ENCODE measurements at regions of chr6 and their contacts with region 1.

Region 1: GRCh38 chr6:138509371-138509770 is 10.1 kb upstream of the NHSL1 start:
- DNase-seq: peak; percentile 71
- H3K4me3 Mint-ChIP-seq: no peak overlapping the region
- H3K27ac Mint-ChIP-seq: no peak overlapping the region
- H3K4me1 Mint-ChIP-seq: peaks cover 18% of the 10 kb centered on the region
- H3K27me3 Mint-ChIP-seq: no peaks in the 10 kb centered on the region
- CTCF ChIP-seq: peak; percentile 33

Region 2: DNA sequence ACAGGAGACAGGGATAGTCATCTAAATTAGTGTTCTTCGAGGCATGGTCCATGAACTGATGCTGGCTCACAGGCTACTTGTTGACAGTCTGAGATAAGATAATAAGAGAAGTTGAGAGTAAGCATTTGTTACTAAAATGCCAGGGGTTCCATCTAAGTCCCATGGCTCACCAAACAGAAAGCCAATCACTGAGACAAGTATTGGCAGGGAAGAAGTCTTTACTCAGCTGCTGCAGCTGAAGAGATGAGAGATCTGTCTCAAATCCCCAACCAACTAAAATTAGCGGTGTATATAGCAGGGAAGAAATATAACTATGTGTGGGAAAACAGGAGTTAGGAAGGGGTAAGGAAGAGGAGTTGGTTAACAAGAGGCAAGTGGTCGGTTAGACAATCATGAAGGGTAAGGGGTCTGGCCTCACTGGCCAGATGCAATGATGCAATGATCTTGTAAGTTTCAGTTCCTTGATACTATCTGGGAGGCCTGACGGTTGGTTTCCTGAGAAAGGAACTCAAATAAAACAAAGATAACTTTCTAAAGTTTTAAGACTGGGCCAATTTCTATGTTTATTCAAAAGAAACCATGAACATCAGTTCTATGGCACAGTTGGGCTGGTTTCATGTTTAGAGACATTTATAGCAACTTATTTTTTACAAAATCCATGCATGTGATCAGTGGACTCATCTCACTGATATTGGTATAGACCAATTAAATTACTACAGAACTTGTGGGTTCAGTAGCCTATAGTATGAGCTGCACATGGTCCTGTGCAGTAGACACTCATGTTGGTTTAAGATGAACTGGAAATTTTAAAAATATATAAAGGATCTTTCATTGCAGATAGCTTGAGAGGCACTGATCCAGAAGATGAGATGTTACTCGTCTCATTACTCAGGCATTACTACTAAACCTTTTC is 115.2 kb before region 1 on chr6:
- CTCF ChIA-PET with region 1: no interaction called
- POLR2A ChIA-PET with region 1: no interaction called
- intact Hi-C with region 1: no loop called
- DNase-seq: no peak
- H3K4me3 Mint-ChIP-seq: no peak overlapping the region
- H3K27ac Mint-ChIP-seq: no peak overlapping the region
- H3K4me1 Mint-ChIP-seq: peaks cover 5% of the 10 kb centered on the region
- H3K27me3 Mint-ChIP-seq: no peaks in the 10 kb centered on the region
- CTCF ChIP-seq: no peak

Region 3: GRCh38 chr6:138434925-138435324 is 74.4 kb before region 1 on chr6:
- CTCF ChIA-PET with region 1: interaction called, 213 read pairs
- POLR2A ChIA-PET with region 1: interaction called, 24 read pairs
- intact Hi-C with region 1: no loop called
- DNase-seq: no peak
- H3K4me3 Mint-ChIP-seq: no peak overlapping the region
- H3K27ac Mint-ChIP-seq: no peak overlapping the region
- H3K4me1 Mint-ChIP-seq: no peaks in the 10 kb centered on the region
- H3K27me3 Mint-ChIP-seq: no peaks in the 10 kb centered on the region
- CTCF ChIP-seq: no peak

Region 4: GRCh38 chr6:138440758-138441357 is 68.5 kb before region 1 on chr6:
- CTCF ChIA-PET with region 1: interaction called, 22 read pairs
- POLR2A ChIA-PET with region 1: interaction called, 3 read pairs
- intact Hi-C with region 1: no loop called
- DNase-seq: no peak
- H3K4me3 Mint-ChIP-seq: no peak overlapping the region
- H3K27ac Mint-ChIP-seq: no peak overlapping the region
- H3K4me1 Mint-ChIP-seq: peaks cover 7% of the 10 kb centered on the region
- H3K27me3 Mint-ChIP-seq: no peaks in the 10 kb centered on the region
- CTCF ChIP-seq: no peak

Region 5: DNA sequence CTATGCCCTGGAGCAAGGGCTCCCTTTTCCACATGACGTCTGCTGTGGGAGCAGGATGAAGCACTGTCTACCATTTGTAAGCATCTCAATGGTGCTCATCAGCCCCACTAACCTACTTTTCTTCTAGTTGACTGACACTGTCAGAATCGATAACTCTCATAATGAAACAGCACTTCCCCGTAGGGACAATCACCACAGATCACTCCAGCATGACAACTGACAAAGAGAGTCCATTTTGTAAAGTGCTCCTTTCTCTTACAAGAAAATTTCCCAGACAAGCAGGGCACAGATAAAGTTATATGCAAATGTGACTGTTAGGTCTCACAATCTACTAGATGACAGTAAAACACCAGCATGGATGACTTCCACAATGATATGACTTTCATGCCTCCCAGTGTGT is 58.9 kb before region 1 on chr6:
- CTCF ChIA-PET with region 1: interaction called, 32 read pairs
- POLR2A ChIA-PET with region 1: interaction called, 13 read pairs
- intact Hi-C with region 1: loop called (anchors 5 kb)
- DNase-seq: no peak
- H3K4me3 Mint-ChIP-seq: no peak overlapping the region
- H3K27ac Mint-ChIP-seq: no peak overlapping the region
- H3K4me1 Mint-ChIP-seq: peaks cover 10% of the 10 kb centered on the region
- H3K27me3 Mint-ChIP-seq: no peaks in the 10 kb centered on the region
- CTCF ChIP-seq: no peak

Region 6: DNA sequence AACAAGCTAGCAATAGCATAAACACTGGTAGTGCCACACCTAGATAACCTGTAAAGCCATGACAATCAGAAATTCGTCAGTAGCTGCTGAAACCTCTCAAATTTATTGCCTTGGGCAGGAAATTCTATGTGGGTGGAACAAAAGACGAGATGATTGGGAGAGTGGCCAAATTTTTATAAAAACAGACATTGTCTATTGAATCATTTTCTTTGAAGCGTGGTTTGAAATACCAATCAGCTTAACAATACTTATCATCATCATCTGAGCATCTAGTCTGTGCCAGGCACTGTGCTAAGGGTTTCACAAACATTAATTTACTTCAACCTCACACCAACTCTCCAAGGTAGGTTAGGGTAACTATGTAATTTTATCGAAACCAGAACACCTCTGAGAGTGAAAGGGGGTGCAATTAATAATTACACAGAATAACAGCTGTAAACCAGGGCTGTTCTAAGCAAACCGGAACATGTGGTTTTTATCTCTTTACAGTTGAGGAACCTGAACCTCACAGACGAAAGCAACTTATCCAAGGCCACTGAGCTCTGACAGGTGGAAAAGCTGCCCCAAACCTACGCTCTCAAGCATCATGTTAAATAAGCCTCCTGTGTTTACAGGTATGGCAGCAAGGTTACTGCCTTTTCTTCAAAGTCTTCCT is 53.5 kb before region 1 on chr6:
- CTCF ChIA-PET with region 1: interaction called, 32 read pairs
- POLR2A ChIA-PET with region 1: interaction called, 13 read pairs
- intact Hi-C with region 1: loop called (anchors 5 kb)
- DNase-seq: peak; percentile 94
- H3K4me3 Mint-ChIP-seq: peak overlapping the region; percentile 68
- H3K27ac Mint-ChIP-seq: peak overlapping the region; percentile 82
- H3K4me1 Mint-ChIP-seq: peaks cover 10% of the 10 kb centered on the region
- H3K27me3 Mint-ChIP-seq: no peaks in the 10 kb centered on the region
- CTCF ChIP-seq: no peak

Region 7: GRCh38 chr6:138493413-138493812 is 16.0 kb before region 1 on chr6:
- CTCF ChIA-PET with region 1: interaction called, 10 read pairs
- POLR2A ChIA-PET with region 1: interaction called, 33 read pairs
- intact Hi-C with region 1: no loop called
- DNase-seq: peak; percentile 79
- H3K4me3 Mint-ChIP-seq: peak overlapping the region; percentile 67
- H3K27ac Mint-ChIP-seq: peak overlapping the region; percentile 98
- H3K4me1 Mint-ChIP-seq: peaks cover 12% of the 10 kb centered on the region
- H3K27me3 Mint-ChIP-seq: no peaks in the 10 kb centered on the region
- CTCF ChIP-seq: no peak

Region 8: DNA sequence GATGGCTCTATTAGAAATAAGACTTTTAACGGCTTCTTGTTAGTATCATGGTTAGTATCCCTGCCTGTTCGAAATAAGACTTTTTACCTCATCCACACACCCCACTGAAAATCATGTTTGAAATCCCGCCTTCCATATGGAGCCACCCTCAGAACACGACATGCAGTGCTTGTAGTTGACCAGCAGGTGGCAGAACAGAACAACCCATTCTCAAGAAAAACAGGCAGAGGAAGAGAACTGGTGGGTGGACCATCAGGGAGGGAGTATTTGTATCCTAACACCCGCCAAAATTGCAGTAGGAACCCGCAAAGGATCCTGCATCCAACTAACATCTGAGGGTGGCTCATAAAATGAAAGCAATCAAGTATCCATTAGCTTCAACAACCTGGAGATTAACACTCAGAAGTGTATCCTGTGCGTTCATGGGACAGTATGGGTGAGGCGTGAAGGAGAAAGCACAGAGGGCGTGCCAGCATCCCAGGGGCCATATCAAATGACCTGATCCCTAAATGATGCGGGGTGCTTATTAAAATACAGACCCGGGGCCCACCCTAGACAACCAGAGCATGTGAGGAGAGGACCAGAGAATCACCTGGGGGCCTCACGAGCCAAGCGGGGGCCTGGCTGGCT is 79.5 kb after region 1 on chr6:
- CTCF ChIA-PET with region 1: interaction called, 35 read pairs
- POLR2A ChIA-PET with region 1: no interaction called
- intact Hi-C with region 1: no loop called
- DNase-seq: peak; percentile 84
- H3K4me3 Mint-ChIP-seq: no peak overlapping the region
- H3K27ac Mint-ChIP-seq: no peak overlapping the region
- H3K4me1 Mint-ChIP-seq: peaks cover 31% of the 10 kb centered on the region
- H3K27me3 Mint-ChIP-seq: no peaks in the 10 kb centered on the region
- CTCF ChIP-seq: peak; percentile 82

Region 9: GRCh38 chr6:138785980-138786379 is 276.6 kb after region 1 on chr6:
- CTCF ChIA-PET with region 1: no interaction called
- POLR2A ChIA-PET with region 1: no interaction called
- intact Hi-C with region 1: no loop called
- DNase-seq: no peak
- H3K4me3 Mint-ChIP-seq: no peak overlapping the region
- H3K27ac Mint-ChIP-seq: no peak overlapping the region
- H3K4me1 Mint-ChIP-seq: no peaks in the 10 kb centered on the region
- H3K27me3 Mint-ChIP-seq: no peaks in the 10 kb centered on the region
- CTCF ChIP-seq: no peak

Measured in MCF 10A (cell line).